Activated T-helper 1 cell treated with anti-CD3 and anti-CD28 coated beads, Interleukin-12 subunit alpha, Interleukin-12 subunit beta, Interleukin-2, Interleukin-4 antibody, amounts not matched to agents 30 ng/mL and 10 ng/mL and 1 ng/mL, durations not matched to agents 14 hours and 24 hours and 36 hours (primary cell): ENCODE measurements at regions of chr1 and their contacts with region 1.

Region 1: GRCh38 chr1:234400773-234401172 is 27.5 kb downstream of the COA6 start:
- DNase-seq: no peak
- H3K4me3 Mint-ChIP-seq: peak overlapping the region; percentile 50
- H3K27ac Mint-ChIP-seq: peak overlapping the region; percentile 70
- H3K4me1 Mint-ChIP-seq: peaks cover 60% of the 10 kb centered on the region
- H3K27me3 Mint-ChIP-seq: peaks cover 2% of the 10 kb centered on the region

Region 2: GRCh38 chr1:234599617-234600417 is 199.0 kb after region 1 on chr1:
- intact Hi-C with region 1: loop called (anchors 10 kb)
- DNase-seq: peak; percentile 69
- H3K4me3 Mint-ChIP-seq: peak overlapping the region; percentile 88
- H3K27ac Mint-ChIP-seq: peak overlapping the region; percentile 96
- H3K4me1 Mint-ChIP-seq: peaks cover 56% of the 10 kb centered on the region
- H3K27me3 Mint-ChIP-seq: no peaks in the 10 kb centered on the region